B cell (primary cell): ENCODE measurements at regions of chr13 and their contacts with region 1.

Region 1: GRCh38 chr13:98672944-98673545 is 79.4 kb downstream of the SLC15A1 start:
- DNase-seq: peak; percentile 68
- ATAC-seq: peak; percentile 53
- H3K4me3 ChIP-seq: no peak overlapping the region
- H3K4me3 Mint-ChIP-seq: no peak overlapping the region
- H3K27ac ChIP-seq: no peak overlapping the region
- H3K27ac Mint-ChIP-seq: no peak overlapping the region
- H3K4me1 ChIP-seq: peaks cover 0 to 3% of the 10 kb centered on the region in 2 donors
- H3K4me1 Mint-ChIP-seq: no peaks in the 10 kb centered on the region
- H3K27me3 ChIP-seq: no peaks in the 10 kb centered on the region
- H3K27me3 Mint-ChIP-seq: peaks cover 12% of the 10 kb centered on the region
- CTCF ChIP-seq: peak; percentile 83

Region 2: GRCh38 chr13:97855570-97856303 is 817.3 kb before region 1 on chr13:
- CTCF ChIA-PET with region 1: interaction called, 13 read pairs
- POLR2A ChIA-PET with region 1: no interaction called
- intact Hi-C with region 1: no loop called
- DNase-seq: peak; percentile 31
- ATAC-seq: peak; percentile 28
- H3K4me3 ChIP-seq: no peak overlapping the region
- H3K4me3 Mint-ChIP-seq: no peak overlapping the region
- H3K27ac ChIP-seq: no peak overlapping the region
- H3K27ac Mint-ChIP-seq: no peak overlapping the region
- H3K4me1 ChIP-seq: no peaks in the 10 kb centered on the region
- H3K4me1 Mint-ChIP-seq: peaks cover 8% of the 10 kb centered on the region
- H3K27me3 ChIP-seq: peaks cover 0 to 10% (median 3%) of the 10 kb centered on the region in 4 experiments
- H3K27me3 Mint-ChIP-seq: peaks cover 13% of the 10 kb centered on the region
- CTCF ChIP-seq: peak; percentile 73

Region 3: DNA sequence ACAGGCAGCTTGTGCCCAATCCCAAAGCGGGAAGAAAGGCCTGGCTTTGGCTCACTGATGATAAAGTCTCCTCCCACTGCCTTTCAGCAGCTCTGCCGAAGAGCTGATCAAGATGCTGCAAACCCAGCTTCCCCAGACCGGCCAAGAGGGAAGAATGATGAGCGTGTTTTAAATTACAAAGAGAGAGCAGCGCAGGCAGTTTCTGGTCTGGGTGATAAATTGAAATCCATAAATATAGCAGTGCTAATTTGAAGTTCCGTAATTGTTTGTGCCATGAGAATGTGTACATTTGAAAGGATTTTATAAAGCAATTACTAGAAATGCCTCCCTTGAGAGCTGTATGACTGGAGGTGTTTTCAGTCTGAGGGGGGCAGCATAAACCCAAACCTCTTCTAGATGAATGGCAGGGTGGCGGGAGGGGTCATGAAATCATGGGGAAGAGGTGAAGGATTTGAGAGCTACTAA is 267.9 kb before region 1 on chr13:
- CTCF ChIA-PET with region 1: interaction called, 3 read pairs
- POLR2A ChIA-PET with region 1: no interaction called
- intact Hi-C with region 1: loop called (anchors 1 kb)
- DNase-seq: no peak
- ATAC-seq: no peak
- H3K4me3 ChIP-seq: no peak overlapping the region
- H3K4me3 Mint-ChIP-seq: no peak overlapping the region
- H3K27ac ChIP-seq: no peak overlapping the region
- H3K27ac Mint-ChIP-seq: no peak overlapping the region
- H3K4me1 ChIP-seq: no peaks in the 10 kb centered on the region
- H3K4me1 Mint-ChIP-seq: no peaks in the 10 kb centered on the region
- H3K27me3 ChIP-seq: peaks cover 0 to 3% (median 0%) of the 10 kb centered on the region in 4 experiments
- H3K27me3 Mint-ChIP-seq: peaks cover 13% of the 10 kb centered on the region
- CTCF ChIP-seq: no peak

Region 4: GRCh38 chr13:98842864-98843481 is 169.9 kb after region 1 on chr13:
- CTCF ChIA-PET with region 1: interaction called, 5 read pairs
- POLR2A ChIA-PET with region 1: no interaction called
- intact Hi-C with region 1: loop called (anchors 5 kb)
- DNase-seq: peak; percentile 68
- ATAC-seq: peak; percentile 79
- H3K4me3 ChIP-seq: no peak overlapping the region
- H3K4me3 Mint-ChIP-seq: no peak overlapping the region
- H3K27ac ChIP-seq: no peak overlapping the region
- H3K27ac Mint-ChIP-seq: no peak overlapping the region
- H3K4me1 ChIP-seq: no peaks in the 10 kb centered on the region
- H3K4me1 Mint-ChIP-seq: peaks cover 2% of the 10 kb centered on the region
- H3K27me3 ChIP-seq: no peaks in the 10 kb centered on the region
- H3K27me3 Mint-ChIP-seq: no peaks in the 10 kb centered on the region
- CTCF ChIP-seq: peak; percentile 86